ENCODE measurements at regions of chr4 and their contacts with region 1.

Region 1: DNA sequence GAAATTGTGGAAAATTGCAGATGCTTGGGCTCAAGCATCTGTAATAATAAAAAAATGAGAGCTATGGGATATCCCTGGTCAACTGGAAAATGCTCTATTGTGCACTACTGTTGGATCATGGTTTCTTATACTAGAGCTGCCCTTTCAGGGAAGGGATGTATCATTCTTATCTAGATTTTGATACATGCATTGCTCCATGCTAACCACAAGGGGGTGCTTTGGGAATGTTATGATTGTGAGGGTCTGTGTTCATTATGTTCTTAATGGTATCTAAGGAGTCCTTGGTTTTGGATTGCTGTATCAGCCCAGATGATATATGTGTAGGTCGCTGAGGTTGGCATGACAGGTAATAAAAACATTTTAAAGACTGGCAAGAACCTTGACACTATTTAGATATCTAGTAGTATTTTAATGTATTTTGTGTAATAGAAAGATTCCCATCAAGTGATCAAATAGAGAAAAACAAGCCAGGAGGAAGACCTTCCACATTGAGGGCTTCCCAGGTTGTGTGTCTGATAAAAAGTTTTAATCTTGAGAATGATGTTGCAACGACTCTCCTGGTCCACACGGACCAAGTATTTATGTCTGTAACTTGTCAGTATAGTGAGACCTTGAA is 49.2 kb upstream of the TLR2 start:
- DNase-seq: no peak
- ATAC-seq: peak; percentile 74
- H3K4me3 Mint-ChIP-seq: no peak overlapping the region
- H3K27ac Mint-ChIP-seq: no peak overlapping the region
- H3K4me1 Mint-ChIP-seq: peaks cover 1% of the 10 kb centered on the region
- H3K27me3 Mint-ChIP-seq: no peaks in the 10 kb centered on the region
- CTCF ChIP-seq: peak; percentile 79

Region 2: DNA sequence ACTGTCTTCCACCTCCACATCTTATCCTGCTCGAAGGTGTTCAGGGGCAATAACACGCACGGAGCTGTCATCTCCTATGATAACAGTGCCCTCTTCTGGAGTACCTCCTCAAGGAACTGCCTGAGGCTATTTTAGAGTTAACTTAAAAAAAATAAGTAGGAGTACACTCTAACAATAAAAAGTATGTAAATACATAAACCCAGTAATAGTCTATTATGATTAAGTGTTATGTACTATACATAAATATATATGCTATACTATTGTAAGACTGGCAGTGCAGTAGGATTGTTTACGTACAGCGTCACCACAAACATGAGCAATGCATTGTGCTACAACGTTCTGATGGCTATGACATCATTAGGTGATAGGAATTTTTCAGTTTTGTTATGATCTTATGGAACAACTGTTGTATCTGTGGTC is 14.7 kb after region 1 on chr4:
- CTCF ChIA-PET with region 1: interaction called, 11 read pairs
- POLR2A ChIA-PET with region 1: interaction called, 3 read pairs
- DNase-seq: peak; percentile 19
- ATAC-seq: no peak
- H3K4me3 Mint-ChIP-seq: no peak overlapping the region
- H3K27ac Mint-ChIP-seq: no peak overlapping the region
- H3K4me1 Mint-ChIP-seq: peaks cover 23% of the 10 kb centered on the region
- H3K27me3 Mint-ChIP-seq: no peaks in the 10 kb centered on the region
- CTCF ChIP-seq: no peak

Region 3: DNA sequence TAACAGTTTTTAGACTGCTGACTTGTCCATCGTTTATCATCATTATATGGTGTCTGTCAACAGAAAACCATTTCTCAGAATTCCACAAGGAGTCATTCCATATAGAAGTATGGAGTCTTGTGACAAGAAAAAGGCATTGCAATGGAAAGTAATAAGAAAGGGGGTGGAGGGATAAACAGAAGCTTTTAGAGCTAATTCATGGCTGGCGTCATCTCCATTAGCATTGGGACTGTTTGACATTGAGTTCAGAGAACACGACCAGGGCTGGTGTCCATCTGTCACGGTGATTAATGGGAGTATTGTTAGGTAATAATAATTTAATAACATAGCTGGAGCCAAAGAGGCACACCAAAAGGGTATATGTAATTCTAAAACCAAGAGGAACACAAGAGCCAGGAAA is 255.9 kb after region 1 on chr4:
- CTCF ChIA-PET with region 1: no interaction called
- POLR2A ChIA-PET with region 1: no interaction called
- DNase-seq: no peak
- ATAC-seq: no peak
- H3K4me3 Mint-ChIP-seq: no peak overlapping the region
- H3K27ac Mint-ChIP-seq: no peak overlapping the region
- H3K4me1 Mint-ChIP-seq: peaks cover 5% of the 10 kb centered on the region
- H3K27me3 Mint-ChIP-seq: no peaks in the 10 kb centered on the region; the same call in 1 of the 2 replicates
- CTCF ChIP-seq: no peak

Measured in WTC11 (cell line).